GM10248 (cell line): ENCODE measurements at regions of chr20 and their contacts with region 1.

Region 1: DNA sequence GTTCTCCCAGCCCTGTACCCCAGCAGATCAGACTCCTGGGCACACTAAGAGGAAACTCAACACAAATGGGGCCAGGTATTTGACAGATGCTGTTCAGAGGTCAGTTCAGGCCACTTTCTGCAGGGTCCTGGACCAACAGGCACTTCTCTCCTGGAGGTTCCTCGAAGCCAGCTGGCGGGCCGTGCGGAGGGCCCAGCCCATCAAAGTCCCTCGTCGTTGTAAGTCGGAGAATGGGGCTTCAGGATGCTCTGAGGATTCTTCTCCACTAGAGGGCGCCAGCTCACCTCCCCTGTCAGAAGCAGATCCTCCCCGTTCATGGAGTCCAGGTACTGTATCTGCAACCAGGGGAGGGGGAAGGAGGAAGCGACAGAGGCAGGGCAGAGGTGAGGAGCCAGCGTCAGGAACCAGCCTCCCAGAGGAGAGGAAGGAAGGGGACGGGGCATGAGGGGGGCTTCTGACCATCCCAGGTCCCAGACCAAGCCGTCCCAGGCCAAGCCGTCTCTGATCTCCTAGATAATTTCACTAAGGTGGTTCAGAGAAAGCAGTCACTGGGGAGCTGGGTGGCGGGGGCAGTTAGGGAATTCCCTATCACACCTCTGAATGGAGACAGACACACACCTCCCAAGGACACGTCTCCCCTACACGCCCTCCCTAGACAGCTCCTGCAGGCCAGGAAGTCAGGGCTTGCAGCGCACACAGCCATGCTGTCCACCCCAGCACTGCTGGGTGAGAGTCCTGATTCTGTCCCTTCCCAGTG is 11.7 kb upstream of the FAM83C start:
- DNase-seq: peak; percentile 88
- CTCF ChIP-seq: peak; percentile 81

Region 2: GRCh38 chr20:35318502-35319157 is 14.7 kb after region 1 on chr20:
- CTCF ChIA-PET with region 1: interaction called, 108 read pairs
- POLR2A ChIA-PET with region 1: no interaction called
- DNase-seq: no peak
- CTCF ChIP-seq: no peak

Region 3: DNA sequence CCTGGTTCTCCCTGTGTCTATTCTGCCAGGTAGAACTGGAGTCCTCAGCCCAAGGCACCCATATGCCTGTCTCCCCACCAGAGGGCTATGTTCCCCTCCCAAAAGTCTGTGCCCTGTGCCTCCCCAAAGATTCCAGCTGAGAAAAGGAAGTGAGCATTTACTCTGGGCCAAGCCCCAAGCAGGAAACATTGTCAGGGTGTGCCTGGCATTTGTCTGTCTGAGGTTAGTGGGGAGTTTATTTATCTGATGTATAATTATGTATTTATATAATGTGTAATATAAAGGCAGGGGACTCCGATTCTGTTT is 128.5 kb after region 1 on chr20:
- CTCF ChIA-PET with region 1: interaction called, 14 read pairs
- POLR2A ChIA-PET with region 1: no interaction called
- DNase-seq: no peak
- CTCF ChIP-seq: no peak

Region 4: GRCh38 chr20:35447082-35447789 is 143.3 kb after region 1 on chr20:
- CTCF ChIA-PET with region 1: interaction called, 74 read pairs
- POLR2A ChIA-PET with region 1: no interaction called
- DNase-seq: peak; percentile 83
- CTCF ChIP-seq: peak; percentile 97